ENCODE measurements at regions of chr6 and their contacts with region 1.

Region 1: GRCh38 chr6:30075161-30075986 is at the start of gene RNF39:
- DNase-seq: peak; percentile 83
- ATAC-seq: peak; percentile 68
- H3K4me3 Mint-ChIP-seq: peak within 1 kb of the TSS; percentile 96
- H3K27ac Mint-ChIP-seq: peak within 1 kb of the TSS; percentile 47
- H3K4me1 Mint-ChIP-seq: peaks cover 32% of the 10 kb centered on the region
- H3K27me3 Mint-ChIP-seq: peaks cover 94% of the 10 kb centered on the region
- CTCF ChIP-seq: peak; percentile 73
- total RNA-seq, gene RNF39: 4.2 to 5.1 TPM (median 4.5 TPM) in 3 replicates

Region 2: DNA sequence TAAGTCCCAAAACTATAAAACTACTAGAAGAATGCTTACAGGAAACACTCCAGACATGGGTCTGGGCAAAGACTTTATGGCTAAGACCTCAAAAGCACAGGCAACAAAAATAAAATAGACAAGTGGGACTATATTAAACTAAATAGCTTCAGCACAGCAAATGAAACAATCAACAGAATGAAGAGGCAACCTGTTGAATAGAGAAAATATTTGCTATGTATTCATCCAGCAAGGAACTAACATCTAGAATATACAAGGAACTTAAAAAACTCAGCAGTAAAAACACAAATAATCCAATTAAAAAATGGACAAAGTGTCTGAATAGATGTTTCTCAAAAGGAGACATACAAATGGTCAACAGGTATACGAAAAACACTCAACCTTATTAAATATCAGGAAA is 217.4 kb before region 1 on chr6:
- CTCF ChIA-PET with region 1: no interaction called
- POLR2A ChIA-PET with region 1: no interaction called
- DNase-seq: no peak
- ATAC-seq: no peak
- H3K4me3 Mint-ChIP-seq: no peak overlapping the region
- H3K27ac Mint-ChIP-seq: no peak overlapping the region
- H3K4me1 Mint-ChIP-seq: no peaks in the 10 kb centered on the region
- H3K27me3 Mint-ChIP-seq: peaks cover 66% of the 10 kb centered on the region
- CTCF ChIP-seq: no peak

Region 3: GRCh38 chr6:29953001-29953441 is 122.4 kb before region 1 on chr6:
- CTCF ChIA-PET with region 1: no interaction called
- POLR2A ChIA-PET with region 1: no interaction called
- DNase-seq: no peak
- ATAC-seq: no peak
- H3K4me3 Mint-ChIP-seq: no peak overlapping the region
- H3K27ac Mint-ChIP-seq: no peak overlapping the region
- H3K4me1 Mint-ChIP-seq: no peaks in the 10 kb centered on the region
- H3K27me3 Mint-ChIP-seq: peaks cover 14% of the 10 kb centered on the region
- CTCF ChIP-seq: no peak

Region 4: GRCh38 chr6:30044630-30045029 is 30.7 kb before region 1 on chr6:
- CTCF ChIA-PET with region 1: no interaction called
- POLR2A ChIA-PET with region 1: no interaction called
- DNase-seq: no peak
- ATAC-seq: no peak
- H3K4me3 Mint-ChIP-seq: no peak overlapping the region
- H3K27ac Mint-ChIP-seq: no peak overlapping the region
- H3K4me1 Mint-ChIP-seq: no peaks in the 10 kb centered on the region
- H3K27me3 Mint-ChIP-seq: no peaks in the 10 kb centered on the region
- CTCF ChIP-seq: no peak

Region 5: DNA sequence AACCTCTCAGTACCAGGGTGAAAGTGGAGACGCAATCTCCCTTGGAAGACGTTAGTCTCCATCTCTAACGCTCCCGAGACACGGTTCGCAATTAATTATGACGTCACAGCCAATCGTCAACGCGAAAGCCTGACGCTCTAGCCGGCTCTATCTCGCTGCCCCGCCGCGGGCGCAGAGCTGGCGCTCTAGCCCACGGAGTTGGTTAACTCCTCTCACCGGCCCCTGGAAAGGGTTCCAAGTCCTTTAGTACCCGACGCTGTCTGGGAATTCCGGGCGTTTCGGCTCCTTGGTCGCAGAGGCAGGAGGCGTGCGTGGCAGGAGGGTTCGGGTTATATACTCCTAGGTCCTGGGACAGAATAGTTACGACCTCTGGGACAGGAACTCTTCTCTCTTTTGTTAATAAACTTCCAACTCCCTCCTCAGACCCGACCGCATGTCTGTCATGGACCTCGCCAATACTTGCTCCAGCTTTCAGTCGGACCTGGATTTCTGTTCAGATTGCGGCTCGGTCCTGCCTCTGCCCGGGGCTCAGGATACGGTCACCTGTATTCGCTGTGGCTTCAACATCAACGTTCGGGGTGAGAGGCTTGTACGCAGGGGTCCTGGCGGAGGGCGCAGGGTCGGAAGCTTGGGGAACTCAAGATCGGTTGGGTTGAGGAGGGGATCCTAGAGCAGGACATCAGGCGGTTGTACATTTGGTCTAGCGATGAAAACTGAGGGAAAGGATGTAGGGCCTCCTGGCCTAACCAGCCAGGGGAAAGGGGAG is 14.1 kb before region 1 on chr6 and contains the start of gene POLR1H:
- CTCF ChIA-PET with region 1: interaction called, 10 read pairs
- POLR2A ChIA-PET with region 1: interaction called, 8 read pairs
- DNase-seq: peak; percentile 92
- ATAC-seq: peak; percentile 98
- H3K4me3 Mint-ChIP-seq: peak within 1 kb of the TSS; percentile 98
- H3K27ac Mint-ChIP-seq: peak within 1 kb of the TSS; percentile 94
- H3K4me1 Mint-ChIP-seq: peaks cover 28% of the 10 kb centered on the region
- H3K27me3 Mint-ChIP-seq: no peaks in the 10 kb centered on the region
- CTCF ChIP-seq: no peak
- total RNA-seq, gene POLR1H: 37.7 to 39.6 TPM (median 38.8 TPM) in 3 replicates

Region 6: DNA sequence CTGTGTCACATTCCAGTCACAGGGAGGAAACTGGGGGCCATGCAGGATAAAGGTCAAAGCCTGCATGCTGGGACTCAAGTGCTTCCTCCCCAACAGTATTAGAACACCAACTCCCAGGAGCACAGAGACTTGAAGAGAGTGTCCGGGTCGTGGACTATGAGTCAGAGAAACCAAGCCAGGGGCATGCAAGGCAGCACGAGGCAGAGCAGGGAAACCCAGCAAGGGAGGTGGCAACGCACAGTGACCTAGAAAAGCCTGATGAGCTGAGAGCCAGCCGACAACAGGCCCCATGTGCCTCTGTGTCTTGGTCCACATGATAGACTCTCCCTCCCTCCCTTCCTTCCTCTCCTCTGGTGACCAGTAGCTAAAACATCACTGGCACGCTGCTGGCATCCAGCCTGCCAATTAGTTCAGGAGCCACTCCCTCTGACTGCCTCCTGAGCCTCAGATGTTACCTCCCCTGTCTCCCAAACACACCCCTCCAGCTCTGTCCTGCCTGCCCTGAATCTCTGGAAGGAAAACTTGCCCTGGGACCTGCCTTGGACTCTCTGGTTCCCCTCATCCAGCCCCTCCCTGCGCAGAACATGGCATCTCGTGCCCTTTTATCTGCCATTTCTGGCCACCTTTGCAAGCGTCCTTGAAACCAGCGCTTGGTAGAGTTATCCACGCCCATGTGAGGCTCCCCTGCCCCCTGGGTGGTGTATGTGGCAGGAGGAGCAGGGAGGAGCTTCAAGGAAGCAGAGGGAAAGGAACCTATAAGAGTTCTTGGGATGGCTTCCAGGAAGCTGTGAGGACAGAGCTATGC is 16.4 kb after region 1 on chr6:
- CTCF ChIA-PET with region 1: interaction called, 11 read pairs
- POLR2A ChIA-PET with region 1: no interaction called
- DNase-seq: no peak
- ATAC-seq: peak; percentile 55; the same call in 1 of the 2 replicates
- H3K4me3 Mint-ChIP-seq: no peak overlapping the region
- H3K27ac Mint-ChIP-seq: no peak overlapping the region
- H3K4me1 Mint-ChIP-seq: peaks cover 8% of the 10 kb centered on the region
- H3K27me3 Mint-ChIP-seq: peaks cover 42% of the 10 kb centered on the region
- CTCF ChIP-seq: no peak

Measured in WTC11 (cell line).